ENCODE measurements at regions of chr4 and their contacts with region 1.

Region 1: DNA sequence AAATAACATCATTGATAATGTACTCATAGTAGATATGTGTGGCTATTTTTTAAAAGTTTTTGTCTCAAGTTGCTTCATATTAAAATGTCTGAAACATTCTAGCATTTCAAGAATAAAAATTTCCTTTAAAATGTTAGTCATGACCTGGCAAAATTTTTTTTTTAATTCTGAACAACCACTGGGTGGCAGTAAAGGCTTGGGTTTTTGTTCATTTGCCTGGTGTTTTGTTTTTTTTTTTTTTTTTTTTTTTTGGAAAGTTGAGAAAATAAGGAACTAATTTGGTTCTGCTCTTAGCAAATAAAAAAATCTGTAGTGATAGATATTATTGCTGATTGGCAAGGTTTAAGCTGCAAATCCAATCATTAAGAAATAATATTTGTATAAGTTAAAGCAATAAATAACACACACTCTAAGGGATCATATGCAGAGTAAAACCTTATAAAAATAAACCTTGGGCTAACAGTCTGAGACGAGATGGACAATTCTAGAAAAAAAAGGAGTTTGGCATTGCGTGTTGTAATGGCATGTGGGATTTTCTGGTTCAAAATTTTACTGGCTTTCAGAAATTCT is 81.4 kb downstream of the CEP44 start:
- H3K4me3 Mint-ChIP-seq: no peak overlapping the region
- H3K27ac Mint-ChIP-seq: no peak overlapping the region
- H3K4me1 Mint-ChIP-seq: no peaks in the 10 kb centered on the region
- H3K27me3 Mint-ChIP-seq: no peaks in the 10 kb centered on the region

Region 2: DNA sequence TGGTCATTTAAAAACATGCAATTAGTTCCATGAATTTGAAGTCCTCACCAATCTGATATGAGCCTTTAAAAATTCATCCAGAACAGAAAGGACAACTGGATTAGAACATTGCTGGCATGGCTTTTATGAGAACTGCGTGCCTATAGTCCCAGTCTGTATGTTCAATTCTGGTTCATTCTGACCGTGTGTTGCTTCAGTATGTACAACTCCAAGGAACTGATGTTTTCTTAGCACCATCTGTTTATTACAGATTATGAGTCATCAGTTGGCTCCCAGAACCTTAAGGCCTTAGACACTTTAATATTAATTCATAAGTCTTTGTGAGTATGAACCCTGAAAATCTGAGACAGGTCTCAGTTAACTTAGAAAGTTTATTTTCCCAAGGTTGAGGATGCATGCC is 33.6 kb after region 1 on chr4:
- intact Hi-C with region 1: no loop called
- H3K4me3 Mint-ChIP-seq: no peak overlapping the region
- H3K27ac Mint-ChIP-seq: no peak overlapping the region
- H3K4me1 Mint-ChIP-seq: peaks cover 15% of the 10 kb centered on the region
- H3K27me3 Mint-ChIP-seq: no peaks in the 10 kb centered on the region

Region 3: DNA sequence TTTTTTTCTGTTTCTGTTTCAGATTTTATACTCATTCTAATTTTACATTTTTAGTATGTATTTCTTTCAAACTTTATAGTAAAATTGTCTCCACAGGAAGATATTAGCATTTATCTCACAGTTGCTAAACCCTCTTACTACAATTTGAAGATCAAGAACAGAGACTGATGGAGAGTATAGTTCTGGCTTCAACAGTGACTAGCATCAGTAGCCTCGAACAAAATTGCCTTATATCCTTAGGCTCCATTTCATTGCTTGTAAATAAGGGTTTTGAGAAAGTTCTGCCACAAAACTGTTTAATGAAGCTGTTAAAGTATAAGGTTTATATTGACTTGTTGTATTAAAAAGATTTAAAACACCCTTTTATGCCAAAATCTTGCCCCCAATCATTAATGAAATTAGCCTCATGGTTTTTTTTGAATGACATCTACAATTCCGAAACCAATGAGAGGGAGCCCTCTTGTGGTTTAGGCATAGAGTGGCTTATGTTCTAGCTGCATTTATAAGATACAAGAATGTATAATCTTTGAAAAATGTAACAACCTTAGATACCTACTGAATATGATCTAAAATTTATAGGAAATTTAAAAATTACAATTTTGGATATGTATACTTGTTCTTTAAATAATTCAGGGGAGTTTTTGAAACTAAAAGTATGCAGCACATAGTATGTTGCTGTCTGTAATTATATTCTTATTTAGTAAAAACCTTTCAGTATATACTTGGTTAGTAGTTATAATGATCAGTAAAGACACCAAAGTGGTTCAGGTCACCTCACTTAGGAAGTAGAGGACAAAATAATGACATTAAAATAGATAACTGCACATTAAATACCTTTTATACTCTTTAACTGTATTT is 267.0 kb after region 1 on chr4:
- intact Hi-C with region 1: loop called (anchors 1 kb)
- H3K4me3 Mint-ChIP-seq: no peak overlapping the region
- H3K27ac Mint-ChIP-seq: no peak overlapping the region
- H3K4me1 Mint-ChIP-seq: no peaks in the 10 kb centered on the region
- H3K27me3 Mint-ChIP-seq: no peaks in the 10 kb centered on the region

Region 4: GRCh38 chr4:174646326-174646725 is 281.2 kb after region 1 on chr4:
- intact Hi-C with region 1: no loop called
- H3K4me3 Mint-ChIP-seq: no peak overlapping the region
- H3K27ac Mint-ChIP-seq: no peak overlapping the region
- H3K4me1 Mint-ChIP-seq: no peaks in the 10 kb centered on the region
- H3K27me3 Mint-ChIP-seq: peaks cover 1% of the 10 kb centered on the region

Region 5: GRCh38 chr4:174714393-174715211 is 349.5 kb after region 1 on chr4:
- intact Hi-C with region 1: loop called (anchors 1 kb)
- H3K4me3 Mint-ChIP-seq: no peak overlapping the region
- H3K27ac Mint-ChIP-seq: no peak overlapping the region
- H3K4me1 Mint-ChIP-seq: no peaks in the 10 kb centered on the region
- H3K27me3 Mint-ChIP-seq: peaks cover 1% of the 10 kb centered on the region

Region 6: GRCh38 chr4:174910271-174910670 is 545.2 kb after region 1 on chr4:
- intact Hi-C with region 1: no loop called
- H3K4me3 Mint-ChIP-seq: no peak overlapping the region
- H3K27ac Mint-ChIP-seq: no peak overlapping the region
- H3K4me1 Mint-ChIP-seq: no peaks in the 10 kb centered on the region
- H3K27me3 Mint-ChIP-seq: no peaks in the 10 kb centered on the region

Region 7: DNA sequence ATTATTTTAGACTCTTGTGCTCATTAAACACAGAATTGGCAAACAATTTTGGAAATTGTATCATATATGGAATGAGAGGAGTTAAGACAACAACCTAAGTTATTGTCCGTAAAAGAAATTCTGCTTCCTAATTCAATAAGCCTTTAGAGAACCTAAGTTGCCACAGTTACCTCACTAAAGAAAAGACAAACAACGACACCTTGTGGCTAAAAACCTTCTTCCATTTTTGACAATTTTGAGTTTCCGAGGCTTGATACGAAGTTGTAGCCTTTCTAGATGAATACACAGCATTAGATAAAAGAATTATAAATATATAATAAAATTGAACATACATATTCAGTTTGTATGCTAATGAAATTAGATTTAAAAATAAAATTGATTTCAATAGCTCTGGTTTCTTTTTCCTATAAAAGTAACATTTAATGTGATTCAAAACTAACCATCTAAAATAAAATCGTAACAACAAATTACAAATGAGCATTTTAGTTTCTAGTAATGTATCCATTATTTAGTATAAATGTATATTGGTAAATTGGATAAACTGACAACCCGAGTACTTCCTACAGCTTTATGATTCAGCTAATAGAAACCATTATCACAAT is 1171.8 kb after region 1 on chr4:
- intact Hi-C with region 1: loop called (anchors 5 kb)
- H3K4me3 Mint-ChIP-seq: no peak overlapping the region
- H3K27ac Mint-ChIP-seq: no peak overlapping the region
- H3K4me1 Mint-ChIP-seq: no peaks in the 10 kb centered on the region
- H3K27me3 Mint-ChIP-seq: no peaks in the 10 kb centered on the region